ENCODE measurements at regions of chr19 and their contacts with region 1.

Region 1: GRCh38 chr19:17865364-17866311 is 5.9 kb downstream of the RPL18A start:
- DNase-seq: no peak
- ATAC-seq: peak; percentile 25 to 67 (median 26)
- H3K4me3 ChIP-seq: no peak overlapping the region
- H3K27ac ChIP-seq: no peak overlapping the region
- H3K4me1 ChIP-seq: peaks cover 0 to 12% (median 5%) of the 10 kb centered on the region in 4 donors
- H3K27me3 ChIP-seq: peaks cover 0 to 3% of the 10 kb centered on the region in 2 donors
- CTCF ChIP-seq: no peak
- POLR2A ChIP-seq: no peak

Region 2: GRCh38 chr19:17993076-17993813 is 127.6 kb after region 1 on chr19:
- intact Hi-C with region 1: loop called (anchors 5 kb)
- DNase-seq: no peak
- ATAC-seq: no peak
- H3K4me3 ChIP-seq: no peak overlapping the region
- H3K27ac ChIP-seq: no peak overlapping the region
- H3K4me1 ChIP-seq: no peaks in the 10 kb centered on the region
- H3K27me3 ChIP-seq: no peaks in the 10 kb centered on the region
- CTCF ChIP-seq: no peak
- POLR2A ChIP-seq: no peak